ENCODE measurements at regions of chr14 and their contacts with region 1.

Region 1: GRCh38 chr14:95561001-95561412 is 26.2 kb downstream of the GLRX5 start:
- DNase-seq: peak; percentile 86
- ATAC-seq: peak; percentile 83

Region 2: DNA sequence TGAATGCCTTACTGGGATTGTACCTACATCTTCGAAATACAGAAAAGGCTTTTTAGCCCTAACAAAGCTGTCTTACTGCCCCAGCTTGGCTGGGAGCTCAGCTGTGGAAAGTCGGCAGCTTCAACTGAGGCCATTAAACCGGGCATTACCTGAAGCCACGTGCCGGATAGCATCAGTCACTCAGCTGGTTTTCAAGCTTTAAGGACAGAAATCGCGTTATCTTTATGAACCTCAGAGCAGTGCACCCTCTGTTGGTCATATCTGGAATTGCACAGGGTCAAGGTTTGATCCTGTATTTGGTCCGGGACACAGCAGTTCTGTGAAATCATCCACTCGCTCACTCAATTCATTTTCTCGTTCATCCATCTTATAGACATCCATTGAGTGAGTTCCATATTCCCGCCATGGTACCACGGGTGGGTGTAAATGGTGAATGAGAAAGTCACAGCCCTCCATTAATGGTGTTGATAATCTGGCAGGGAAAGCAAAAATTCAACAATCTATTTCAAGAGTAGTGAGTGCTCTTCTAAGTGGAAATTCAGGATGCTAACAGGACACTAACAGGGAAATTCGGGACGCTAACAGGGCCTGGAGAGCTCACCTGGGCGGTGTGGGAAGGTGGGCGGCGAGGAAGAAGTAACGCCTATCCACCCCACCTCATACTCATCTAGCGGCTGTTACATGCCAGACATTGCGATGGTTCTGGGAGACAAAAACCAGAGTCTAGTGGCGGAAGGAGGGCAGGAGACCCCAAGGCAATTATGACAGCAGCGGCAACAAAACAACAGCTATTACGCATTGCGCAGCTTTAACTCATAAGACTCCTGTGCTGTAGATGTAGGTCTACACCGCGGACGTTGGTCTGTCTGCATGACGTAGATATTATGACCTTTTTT is 213.5 kb after region 1 on chr14:
- intact Hi-C with region 1: loop called (anchors 10 kb)
- DNase-seq: no peak
- ATAC-seq: peak; percentile 24

Region 3: GRCh38 chr14:95876761-95877538 is 315.9 kb after region 1 on chr14 and contains the start of gene TUNAR:
- intact Hi-C with region 1: no loop called
- DNase-seq: no peak
- ATAC-seq: no peak
- total RNA-seq, gene TUNAR: not detected

Region 4: DNA sequence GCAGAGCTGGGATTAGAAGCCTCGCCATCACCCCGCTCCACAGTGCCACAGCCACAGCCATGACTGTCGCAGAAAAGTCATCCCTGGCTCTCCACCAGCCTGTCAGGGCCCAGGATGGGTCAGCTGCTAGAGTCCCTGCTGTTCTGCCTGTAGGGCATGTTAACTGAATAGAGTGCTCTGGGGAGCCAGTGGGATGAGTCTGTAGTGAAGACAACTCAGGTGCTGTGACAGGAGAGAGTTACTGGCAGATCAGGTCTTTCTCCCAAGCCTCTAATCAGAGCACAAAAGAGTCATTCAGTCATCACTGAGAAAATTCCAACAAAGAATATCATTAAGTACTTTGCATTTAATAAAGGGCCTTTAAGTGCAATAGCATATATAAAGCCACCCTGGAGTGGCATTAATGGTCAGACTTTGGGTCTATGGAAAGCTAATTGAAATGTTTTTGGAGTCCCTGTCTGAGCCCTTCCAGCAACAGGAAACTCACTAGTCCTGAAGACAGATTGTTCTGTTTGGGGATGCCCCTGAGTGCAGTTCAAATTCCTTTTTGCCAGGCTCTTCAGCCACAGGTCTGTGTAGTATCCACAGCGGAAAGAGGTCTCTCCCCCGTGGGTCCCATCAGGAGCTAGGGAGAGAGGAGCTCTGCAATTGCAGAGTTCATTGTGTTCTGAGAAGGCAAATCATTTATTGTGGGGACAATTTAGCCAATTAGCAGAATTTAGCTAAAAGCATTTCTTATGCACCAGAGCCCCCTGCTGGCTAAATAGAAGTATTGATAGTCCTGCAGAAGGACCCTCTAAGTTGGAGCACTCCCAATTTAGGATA is 433.0 kb after region 1 on chr14:
- intact Hi-C with region 1: loop called (anchors 2 kb)
- DNase-seq: no peak
- ATAC-seq: no peak